Activated naive CD4-positive, alpha-beta T cell treated with anti-CD3 and anti-CD28 coated beads for 36 hours (primary cell): ENCODE measurements at regions of chr1 and their contacts with region 1.

Region 1: GRCh38 chr1:192808518-192809306 is at the start of gene RGS2:
- DNase-seq: peak; percentile 86
- H3K4me3 Mint-ChIP-seq: peak within 1 kb of the TSS; percentile 96
- H3K27ac Mint-ChIP-seq: peak within 1 kb of the TSS; percentile 82
- H3K4me1 Mint-ChIP-seq: peaks cover 31% of the 10 kb centered on the region
- H3K27me3 Mint-ChIP-seq: peaks cover 2% of the 10 kb centered on the region
- total RNA-seq, gene RGS2: 11.7 to 11.8 TPM

Region 2: DNA sequence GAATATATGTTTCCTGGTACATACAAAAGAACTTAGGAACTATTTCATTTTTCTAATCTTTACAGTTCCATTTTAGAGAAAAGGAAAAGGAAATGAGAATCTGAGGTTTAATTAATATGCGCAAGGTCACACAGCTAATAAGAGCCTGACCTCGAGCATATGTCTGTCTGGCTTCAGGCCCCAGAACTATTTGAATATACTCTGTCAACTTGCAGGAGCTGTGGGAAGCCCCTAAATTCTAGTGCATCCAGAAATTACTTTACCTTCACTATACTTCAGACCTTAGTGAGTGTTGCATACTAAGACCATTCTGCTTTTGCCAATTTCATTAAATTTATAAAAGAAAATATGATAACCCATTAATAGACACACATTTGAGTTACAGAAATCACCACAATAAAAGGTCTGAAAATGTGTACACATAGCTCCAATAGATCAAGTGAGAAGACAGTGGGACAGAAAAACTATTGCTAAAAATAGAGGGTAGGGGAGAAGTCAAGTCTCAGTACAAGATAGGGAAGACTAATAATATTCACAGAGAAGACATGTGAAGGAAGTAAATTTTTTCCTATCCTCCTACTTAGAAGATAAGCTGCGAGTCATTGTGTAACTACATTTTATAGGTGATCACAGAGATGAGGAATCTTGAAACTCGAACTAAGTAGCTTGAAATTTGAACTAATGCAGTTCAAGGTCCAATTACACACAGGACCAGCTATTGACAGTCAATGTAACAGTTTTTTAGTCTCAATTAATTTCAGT is 168.9 kb before region 1 on chr1:
- CTCF ChIA-PET with region 1: no interaction called
- intact Hi-C with region 1: loop called (anchors 1 kb)
- DNase-seq: peak; percentile 12
- H3K4me3 Mint-ChIP-seq: no peak overlapping the region
- H3K27ac Mint-ChIP-seq: no peak overlapping the region
- H3K4me1 Mint-ChIP-seq: peaks cover 18% of the 10 kb centered on the region
- H3K27me3 Mint-ChIP-seq: peaks cover 7% of the 10 kb centered on the region

Region 3: GRCh38 chr1:192732787-192733186 is 75.9 kb before region 1 on chr1:
- CTCF ChIA-PET with region 1: no interaction called
- intact Hi-C with region 1: no loop called
- DNase-seq: peak; percentile 13
- H3K4me3 Mint-ChIP-seq: no peak overlapping the region
- H3K27ac Mint-ChIP-seq: no peak overlapping the region
- H3K4me1 Mint-ChIP-seq: no peaks in the 10 kb centered on the region
- H3K27me3 Mint-ChIP-seq: no peaks in the 10 kb centered on the region

Region 4: GRCh38 chr1:193019442-193020026 is 210.8 kb after region 1 on chr1:
- CTCF ChIA-PET with region 1: interaction called, 13 read pairs
- intact Hi-C with region 1: loop called (anchors 1 kb)
- DNase-seq: no peak
- H3K4me3 Mint-ChIP-seq: no peak overlapping the region
- H3K27ac Mint-ChIP-seq: no peak overlapping the region
- H3K4me1 Mint-ChIP-seq: no peaks in the 10 kb centered on the region
- H3K27me3 Mint-ChIP-seq: no peaks in the 10 kb centered on the region

Region 5: GRCh38 chr1:193121616-193122593 is 313.2 kb after region 1 on chr1 and contains the start of gene CDC73:
- CTCF ChIA-PET with region 1: interaction called, 6 read pairs
- intact Hi-C with region 1: loop called (anchors 1 kb)
- DNase-seq: peak; percentile 97
- H3K4me3 Mint-ChIP-seq: peak within 1 kb of the TSS; percentile 92
- H3K27ac Mint-ChIP-seq: peak within 1 kb of the TSS; percentile 92
- H3K4me1 Mint-ChIP-seq: peaks cover 43% of the 10 kb centered on the region
- H3K27me3 Mint-ChIP-seq: peaks cover 1% of the 10 kb centered on the region
- total RNA-seq, gene CDC73: 39.0 to 45.2 TPM

Region 6: DNA sequence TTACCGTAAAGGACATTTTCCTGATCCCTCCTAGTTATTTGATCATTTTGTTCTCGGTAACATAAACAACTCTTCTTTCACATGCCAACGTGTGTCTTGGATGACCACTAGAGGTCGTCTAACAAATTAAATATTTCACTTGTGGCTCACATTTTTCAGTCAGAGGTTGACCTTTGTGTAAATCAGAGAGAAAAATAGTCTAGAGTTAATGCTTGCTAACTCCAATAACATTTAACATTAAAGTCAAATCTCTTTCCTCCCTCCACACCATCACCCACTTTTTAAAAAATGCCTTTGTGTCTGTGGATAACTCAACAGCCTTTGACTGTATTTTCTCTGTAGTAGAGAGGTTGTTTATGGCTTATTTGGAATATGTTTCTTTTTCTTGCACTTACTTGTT is 598.2 kb after region 1 on chr1:
- CTCF ChIA-PET with region 1: no interaction called
- intact Hi-C with region 1: loop called (anchors 5 kb)
- DNase-seq: no peak
- H3K4me3 Mint-ChIP-seq: no peak overlapping the region
- H3K27ac Mint-ChIP-seq: no peak overlapping the region
- H3K4me1 Mint-ChIP-seq: peaks cover 26% of the 10 kb centered on the region
- H3K27me3 Mint-ChIP-seq: no peaks in the 10 kb centered on the region

Region 7: DNA sequence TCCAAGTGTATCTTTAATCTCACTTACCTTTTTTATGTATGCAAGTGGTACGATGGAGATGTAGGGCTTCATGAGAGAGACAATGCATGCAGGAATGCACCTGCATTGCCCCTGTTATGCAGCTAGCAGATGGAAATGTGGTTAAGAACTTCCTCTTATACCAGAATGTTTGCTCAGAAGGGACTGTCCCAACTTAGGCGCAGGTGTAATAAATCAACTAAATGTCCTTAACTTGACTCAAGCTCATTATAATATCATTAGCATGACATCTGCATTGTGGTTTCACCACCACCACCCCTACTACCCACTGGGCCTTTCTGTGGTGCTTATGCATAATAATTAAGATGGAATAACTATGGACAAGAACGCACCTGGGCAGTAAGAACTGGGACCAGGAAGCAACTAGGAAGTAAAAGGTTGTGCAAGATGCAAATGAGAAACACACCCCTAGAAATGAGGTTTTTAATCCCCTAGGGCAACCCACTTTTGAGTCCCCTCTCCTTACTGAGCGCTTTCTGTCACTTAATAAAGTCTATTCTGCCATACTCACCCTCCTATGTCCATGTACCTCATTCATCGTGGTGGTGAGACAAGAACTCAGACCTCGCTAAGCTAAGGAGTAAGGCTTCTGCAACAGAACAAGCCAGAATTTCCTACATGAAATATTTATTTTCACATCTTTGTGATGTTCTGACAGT is 1481.0 kb after region 1 on chr1:
- CTCF ChIA-PET with region 1: no interaction called
- intact Hi-C with region 1: loop called (anchors 1 kb)
- DNase-seq: peak; percentile 81
- H3K4me3 Mint-ChIP-seq: peak overlapping the region; percentile 54
- H3K27ac Mint-ChIP-seq: peak overlapping the region; percentile 59
- H3K4me1 Mint-ChIP-seq: peaks cover 25% of the 10 kb centered on the region
- H3K27me3 Mint-ChIP-seq: no peaks in the 10 kb centered on the region